Activated naive CD4-positive, alpha-beta T cell treated with anti-CD3 and anti-CD28 coated beads for 36 hours (primary cell): ENCODE measurements at regions of chr11 and their contacts with region 1.

Region 1: DNA sequence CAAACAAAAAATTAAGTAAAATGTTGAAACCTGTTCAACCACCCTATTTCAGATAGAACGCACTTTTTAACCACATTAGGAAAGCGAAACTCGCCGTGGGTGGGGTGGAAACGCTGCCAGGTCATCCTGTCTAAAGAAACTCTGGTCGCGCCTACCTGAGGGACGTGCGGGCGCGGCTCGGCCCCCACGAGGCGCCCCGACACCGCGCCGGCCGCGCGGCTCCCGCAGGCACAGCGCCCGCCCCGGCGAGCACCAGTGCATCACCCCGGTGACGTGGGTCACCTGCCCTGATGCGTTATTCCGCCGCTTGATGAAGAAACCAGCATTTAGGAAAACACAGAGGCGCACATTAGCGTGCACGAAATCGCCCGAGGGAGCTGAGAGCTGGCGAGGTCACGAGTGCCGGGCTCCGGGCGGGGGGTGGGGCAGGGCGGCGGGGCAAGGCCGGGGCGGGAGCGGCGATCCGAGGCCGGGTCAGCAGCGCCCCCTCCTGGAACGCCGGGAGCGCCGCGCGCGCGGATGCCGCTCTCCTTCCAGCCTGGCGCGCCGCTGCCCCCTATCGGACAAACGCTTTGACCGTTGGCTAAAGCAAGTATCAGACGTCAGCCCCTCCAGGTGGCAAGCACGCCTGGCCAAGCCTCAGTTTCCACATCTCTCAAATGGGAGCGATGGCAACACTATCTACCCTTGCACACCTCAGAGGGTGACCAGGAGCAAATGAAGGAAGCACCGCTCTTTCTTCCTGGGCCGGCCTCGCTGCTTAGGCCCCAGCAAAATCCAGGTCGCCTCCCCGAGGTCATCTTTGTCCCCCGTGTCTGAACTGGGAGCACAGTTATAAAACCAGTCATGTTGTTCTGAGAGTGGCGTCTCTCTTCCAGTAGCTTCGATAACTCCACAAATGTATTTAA is 15.7 kb upstream of the SNX32 start:
- DNase-seq: peak; percentile 96
- H3K4me3 Mint-ChIP-seq: peak overlapping the region; percentile 72
- H3K27ac Mint-ChIP-seq: peak overlapping the region; percentile 50
- H3K4me1 Mint-ChIP-seq: peaks cover 6% of the 10 kb centered on the region
- H3K27me3 Mint-ChIP-seq: no peaks in the 10 kb centered on the region

Region 2: DNA sequence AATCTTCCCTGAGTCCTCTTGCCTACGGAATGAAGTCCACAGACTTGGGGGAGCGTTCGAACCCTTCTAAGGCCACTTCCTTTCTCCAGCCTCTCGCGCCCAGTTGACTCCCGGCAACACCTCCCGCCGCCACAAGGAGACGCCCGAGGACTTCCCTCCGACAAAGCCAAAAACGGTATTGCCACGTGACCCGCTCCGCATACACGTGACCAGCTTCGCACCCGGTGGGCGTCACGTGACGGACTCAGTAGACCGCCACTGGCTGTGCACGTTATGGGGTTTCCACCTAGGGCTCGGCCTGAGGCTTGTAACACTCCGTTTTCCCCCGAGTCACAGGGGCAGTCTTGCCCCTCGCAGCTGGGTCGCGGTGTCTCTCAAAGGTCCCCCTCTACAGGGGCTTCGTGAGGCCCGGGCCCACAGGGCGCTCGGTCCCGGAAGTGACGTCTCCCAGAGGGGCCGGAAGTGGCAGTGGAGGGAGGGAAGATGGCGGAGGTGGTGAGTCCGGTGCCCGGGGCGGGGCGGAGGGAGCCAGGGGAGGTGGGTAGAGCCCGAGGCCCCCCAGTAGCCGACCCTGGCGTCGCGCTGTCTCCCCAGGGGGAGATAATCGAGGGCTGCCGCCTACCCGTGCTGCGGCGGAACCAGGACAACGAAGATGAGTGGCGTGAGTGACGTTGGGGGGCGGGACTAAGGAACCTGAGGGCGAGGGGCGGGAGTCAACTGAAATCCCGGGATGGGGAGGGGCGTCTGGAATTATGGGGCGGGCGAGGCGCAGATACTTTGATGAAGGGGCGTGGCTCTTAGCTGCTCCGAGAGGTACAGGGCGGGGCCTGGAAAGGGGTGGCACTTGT is 106.1 kb before region 1 on chr11 and contains the start of gene KAT5:
- CTCF ChIA-PET with region 1: interaction called, 35 read pairs
- intact Hi-C with region 1: loop called (anchors 1 kb)
- DNase-seq: peak; percentile 100
- H3K4me3 Mint-ChIP-seq: peak within 1 kb of the TSS; percentile 95
- H3K27ac Mint-ChIP-seq: peak within 1 kb of the TSS; percentile 97
- H3K4me1 Mint-ChIP-seq: peaks cover 33% of the 10 kb centered on the region
- H3K27me3 Mint-ChIP-seq: no peaks in the 10 kb centered on the region
- total RNA-seq, gene KAT5: 60.1 to 67.1 TPM

Region 3: GRCh38 chr11:65720237-65720934 is 97.7 kb before region 1 on chr11 and contains the start of gene RNASEH2C:
- CTCF ChIA-PET with region 1: interaction called, 12 read pairs
- intact Hi-C with region 1: no loop called
- DNase-seq: peak; percentile 88
- H3K4me3 Mint-ChIP-seq: peak within 1 kb of the TSS; percentile 95
- H3K27ac Mint-ChIP-seq: peak within 1 kb of the TSS; percentile 84
- H3K4me1 Mint-ChIP-seq: peaks cover 25% of the 10 kb centered on the region
- H3K27me3 Mint-ChIP-seq: no peaks in the 10 kb centered on the region
- total RNA-seq, gene RNASEH2C: 95.6 to 97.8 TPM

Region 4: DNA sequence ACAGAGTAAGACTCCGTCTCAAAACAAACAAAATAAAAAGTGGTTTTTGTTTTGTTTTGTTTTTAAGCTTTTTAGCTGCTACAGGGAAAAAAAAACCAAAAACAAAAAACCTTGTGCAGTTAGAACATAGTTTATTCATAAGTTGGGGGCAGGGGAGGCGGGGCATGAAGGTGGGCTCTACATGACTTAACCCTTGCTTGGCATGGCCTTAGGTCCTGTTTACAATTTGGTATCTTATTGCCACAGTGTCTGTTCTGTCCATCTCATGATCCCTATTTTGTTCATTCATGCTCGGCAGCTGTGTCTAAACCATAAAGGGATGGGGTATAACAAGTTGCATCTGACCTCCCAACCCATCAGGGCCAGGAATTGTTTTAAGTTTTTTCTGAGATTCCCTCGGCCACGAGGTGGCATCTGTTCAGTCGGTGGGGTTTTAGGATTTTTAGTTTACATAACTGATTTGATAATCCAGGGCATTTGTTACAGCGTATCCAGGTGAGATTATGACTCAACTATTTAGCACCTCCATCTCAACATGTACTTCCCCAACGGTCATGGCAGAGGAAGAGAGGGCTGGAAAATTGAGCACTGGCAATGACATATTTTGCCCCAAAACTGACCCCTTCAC is 44.2 kb before region 1 on chr11:
- CTCF ChIA-PET with region 1: interaction called, 158 read pairs
- intact Hi-C with region 1: no loop called
- DNase-seq: no peak
- H3K4me3 Mint-ChIP-seq: no peak overlapping the region
- H3K27ac Mint-ChIP-seq: no peak overlapping the region
- H3K4me1 Mint-ChIP-seq: peaks cover 12% of the 10 kb centered on the region
- H3K27me3 Mint-ChIP-seq: no peaks in the 10 kb centered on the region

Region 5: GRCh38 chr11:65833297-65834030 is 15.4 kb after region 1 on chr11 and contains the start of gene SNX32:
- CTCF ChIA-PET with region 1: interaction called, 7 read pairs
- intact Hi-C with region 1: loop called (anchors 1 kb)
- DNase-seq: peak; percentile 97
- H3K4me3 Mint-ChIP-seq: no peak within 1 kb of the TSS
- H3K27ac Mint-ChIP-seq: no peak within 1 kb of the TSS
- H3K4me1 Mint-ChIP-seq: peaks cover 22% of the 10 kb centered on the region
- H3K27me3 Mint-ChIP-seq: no peaks in the 10 kb centered on the region
- total RNA-seq, gene SNX32: 1.5 to 2.0 TPM